GM10248 (cell line): ENCODE measurements at regions of chr6 and their contacts with region 1.

Region 1: GRCh38 chr6:11346516-11346915 is 114.0 kb upstream of the NEDD9 start:
- DNase-seq: peak; percentile 35
- CTCF ChIP-seq: no peak

Region 2: GRCh38 chr6:11366183-11366933 is 19.8 kb after region 1 on chr6:
- CTCF ChIA-PET with region 1: interaction called, 12 read pairs
- POLR2A ChIA-PET with region 1: no interaction called
- DNase-seq: peak; percentile 72
- CTCF ChIP-seq: no peak